ENCODE measurements at regions of chr14 and their contacts with region 1.

Region 1: GRCh38 chr14:21408147-21408546 is 24.3 kb upstream of the SUPT16H start:
- DNase-seq: no peak
- CTCF ChIP-seq: no peak

Region 2: GRCh38 chr14:21233457-21234076 is 174.6 kb before region 1 on chr14:
- CTCF ChIA-PET with region 1: interaction called, 3 read pairs
- POLR2A ChIA-PET with region 1: interaction called, 17 read pairs
- DNase-seq: no peak
- CTCF ChIP-seq: peak; percentile 14

Region 3: DNA sequence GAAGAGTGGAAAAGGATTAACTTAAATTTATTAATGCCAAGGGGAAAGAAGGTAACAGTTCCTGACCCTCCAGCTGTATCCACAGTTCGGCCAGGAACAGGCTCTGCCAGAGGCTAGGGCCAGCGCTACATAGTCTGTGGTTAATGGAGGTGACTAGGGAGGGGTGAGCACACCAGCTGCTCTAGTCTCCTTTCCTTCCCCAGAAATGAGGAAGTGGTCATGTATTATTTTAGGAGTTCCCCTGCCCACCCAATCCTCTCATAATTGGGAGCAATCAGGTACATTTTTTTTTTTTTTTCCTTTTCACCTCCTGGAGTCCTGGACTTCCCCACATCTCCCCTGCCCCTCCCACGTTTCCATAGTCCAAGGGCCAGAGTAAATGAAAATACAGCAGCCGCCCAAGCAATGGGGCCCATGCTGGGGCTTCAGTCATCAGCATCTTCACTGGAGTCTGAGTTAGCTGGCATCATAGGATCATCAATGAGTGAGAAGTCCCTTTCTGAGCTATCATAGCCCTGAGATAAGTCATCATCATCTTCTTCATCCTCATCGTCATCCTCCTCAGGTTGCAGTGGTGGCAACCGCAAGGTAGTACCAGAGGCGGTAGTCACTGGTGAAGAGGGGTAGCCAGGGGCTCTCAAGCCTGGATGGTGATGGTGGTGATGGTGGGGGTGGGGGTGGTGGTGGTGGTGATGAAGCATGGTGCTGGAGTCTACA is 22.8 kb before region 1 on chr14:
- CTCF ChIA-PET with region 1: no interaction called
- POLR2A ChIA-PET with region 1: no interaction called
- DNase-seq: peak; percentile 58
- CTCF ChIP-seq: no peak

Region 4: DNA sequence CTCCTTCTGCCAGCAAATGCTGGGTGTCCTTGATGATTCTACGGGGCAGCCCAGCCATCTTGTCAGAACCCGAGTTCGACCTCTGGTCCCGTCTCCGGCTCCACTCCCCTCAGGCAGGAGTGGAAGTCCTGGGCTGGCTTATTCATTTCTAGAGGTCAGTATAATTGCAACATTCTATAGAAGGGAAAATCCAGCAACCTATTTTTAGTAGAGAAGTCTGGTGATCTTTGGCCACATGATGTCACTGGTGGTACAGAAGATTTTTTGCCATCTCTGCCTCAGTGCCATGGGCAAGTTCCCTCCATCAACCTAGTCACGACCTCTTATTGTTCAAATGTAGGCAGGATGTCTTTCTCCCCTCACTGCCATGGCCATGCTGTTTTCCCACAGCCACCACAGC is 204.2 kb after region 1 on chr14:
- CTCF ChIA-PET with region 1: no interaction called
- POLR2A ChIA-PET with region 1: no interaction called
- DNase-seq: peak; percentile 22
- CTCF ChIP-seq: no peak

Measured in GM10248 (cell line).